Activated T-helper 1 cell treated with anti-CD3 and anti-CD28 coated beads, Interleukin-12 subunit alpha, Interleukin-12 subunit beta, Interleukin-2, Interleukin-4 antibody, amounts not matched to agents 30 ng/mL and 10 ng/mL and 1 ng/mL, durations not matched to agents 14 hours and 24 hours and 36 hours (primary cell): ENCODE measurements at regions of chr5 and their contacts with region 1.

Region 1: GRCh38 chr5:139633295-139634027 is 14.7 kb upstream of the CXXC5 start:
- DNase-seq: peak; percentile 48
- H3K4me3 Mint-ChIP-seq: no peak overlapping the region
- H3K27ac Mint-ChIP-seq: peak overlapping the region; percentile 11
- H3K4me1 Mint-ChIP-seq: peaks cover 35% of the 10 kb centered on the region
- H3K27me3 Mint-ChIP-seq: no peaks in the 10 kb centered on the region

Region 2: GRCh38 chr5:139417214-139417613 is 216.2 kb before region 1 on chr5:
- intact Hi-C with region 1: loop called (anchors 1 kb)
- DNase-seq: no peak
- H3K4me3 Mint-ChIP-seq: no peak overlapping the region
- H3K27ac Mint-ChIP-seq: peak overlapping the region; percentile 94
- H3K4me1 Mint-ChIP-seq: peaks cover 61% of the 10 kb centered on the region
- H3K27me3 Mint-ChIP-seq: no peaks in the 10 kb centered on the region

Region 3: GRCh38 chr5:139458580-139459406 is 174.7 kb before region 1 on chr5:
- intact Hi-C with region 1: loop called (anchors 1 kb)
- DNase-seq: peak; percentile 80
- H3K4me3 Mint-ChIP-seq: peak overlapping the region; percentile 81
- H3K27ac Mint-ChIP-seq: peak overlapping the region; percentile 99
- H3K4me1 Mint-ChIP-seq: peaks cover 72% of the 10 kb centered on the region
- H3K27me3 Mint-ChIP-seq: no peaks in the 10 kb centered on the region

Region 4: GRCh38 chr5:139668064-139668880 is 34.8 kb after region 1 on chr5:
- intact Hi-C with region 1: loop called (anchors 1 kb)
- DNase-seq: peak; percentile 22
- H3K4me3 Mint-ChIP-seq: peak overlapping the region; percentile 69
- H3K27ac Mint-ChIP-seq: no peak overlapping the region
- H3K4me1 Mint-ChIP-seq: peaks cover 39% of the 10 kb centered on the region
- H3K27me3 Mint-ChIP-seq: peaks cover 9% of the 10 kb centered on the region

Region 5: GRCh38 chr5:139745800-139746690 is 112.6 kb after region 1 on chr5:
- intact Hi-C with region 1: loop called (anchors 1 kb)
- DNase-seq: peak; percentile 19
- H3K4me3 Mint-ChIP-seq: peak overlapping the region; percentile 85
- H3K27ac Mint-ChIP-seq: peak overlapping the region; percentile 26
- H3K4me1 Mint-ChIP-seq: peaks cover 24% of the 10 kb centered on the region
- H3K27me3 Mint-ChIP-seq: peaks cover 45% of the 10 kb centered on the region

Region 6: GRCh38 chr5:140107312-140108083 is 474.0 kb after region 1 on chr5:
- intact Hi-C with region 1: loop called (anchors 2 kb)
- DNase-seq: peak; percentile 90
- H3K4me3 Mint-ChIP-seq: peak overlapping the region; percentile 90
- H3K27ac Mint-ChIP-seq: peak overlapping the region; percentile 93
- H3K4me1 Mint-ChIP-seq: peaks cover 41% of the 10 kb centered on the region
- H3K27me3 Mint-ChIP-seq: peaks cover 60% of the 10 kb centered on the region